Left cardiac atrium (tissue), 4 donors: ENCODE measurements at regions of chr14 and their contacts with region 1.

Region 1: DNA sequence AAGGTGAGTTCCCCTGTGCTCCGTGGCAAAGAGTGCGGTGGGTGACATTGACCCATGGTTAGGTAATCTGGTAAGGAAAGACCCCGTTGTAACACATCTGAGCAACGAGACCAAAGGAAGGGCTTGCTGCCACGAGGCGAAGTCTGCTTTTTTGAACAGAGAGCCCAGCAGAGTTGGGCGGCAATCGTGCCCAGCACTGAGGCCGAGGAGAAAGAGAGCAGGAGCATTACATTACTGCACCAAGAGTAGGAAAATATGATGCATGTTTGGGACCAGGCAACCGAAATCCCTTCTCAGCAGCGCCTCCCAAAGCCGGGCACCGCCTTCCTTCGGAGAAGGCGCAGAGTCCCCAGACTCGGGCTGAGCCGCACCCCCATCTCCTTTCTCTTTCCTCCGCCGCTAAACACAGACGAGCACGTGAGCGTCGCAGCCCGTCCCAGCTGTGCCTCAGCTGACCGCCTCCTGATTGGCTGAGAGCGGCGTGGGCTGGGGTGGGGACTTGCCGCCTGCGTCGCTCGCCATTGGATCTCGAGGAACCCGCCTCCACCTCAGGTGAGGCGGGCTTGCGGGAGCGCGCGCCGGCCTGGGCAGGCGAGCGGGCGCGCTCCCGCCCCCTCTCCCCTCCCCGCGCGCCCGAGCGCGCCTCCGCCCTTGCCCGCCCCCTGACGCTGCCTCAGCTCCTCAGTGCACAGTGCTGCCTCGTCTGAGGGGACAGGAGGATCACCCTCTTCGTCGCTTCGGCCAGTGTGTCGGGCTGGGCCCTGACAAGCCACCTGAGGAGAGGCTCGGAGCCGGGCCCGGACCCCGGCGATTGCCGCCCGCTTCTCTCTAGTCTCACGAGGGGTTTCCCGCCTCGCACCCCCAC is at the start of gene HIF1A:
- DNase-seq: peak; percentile 97
- ATAC-seq: peak; percentile 97 to 98
- total RNA-seq, gene HIF1A: 50.9 to 109 TPM

Region 2: DNA sequence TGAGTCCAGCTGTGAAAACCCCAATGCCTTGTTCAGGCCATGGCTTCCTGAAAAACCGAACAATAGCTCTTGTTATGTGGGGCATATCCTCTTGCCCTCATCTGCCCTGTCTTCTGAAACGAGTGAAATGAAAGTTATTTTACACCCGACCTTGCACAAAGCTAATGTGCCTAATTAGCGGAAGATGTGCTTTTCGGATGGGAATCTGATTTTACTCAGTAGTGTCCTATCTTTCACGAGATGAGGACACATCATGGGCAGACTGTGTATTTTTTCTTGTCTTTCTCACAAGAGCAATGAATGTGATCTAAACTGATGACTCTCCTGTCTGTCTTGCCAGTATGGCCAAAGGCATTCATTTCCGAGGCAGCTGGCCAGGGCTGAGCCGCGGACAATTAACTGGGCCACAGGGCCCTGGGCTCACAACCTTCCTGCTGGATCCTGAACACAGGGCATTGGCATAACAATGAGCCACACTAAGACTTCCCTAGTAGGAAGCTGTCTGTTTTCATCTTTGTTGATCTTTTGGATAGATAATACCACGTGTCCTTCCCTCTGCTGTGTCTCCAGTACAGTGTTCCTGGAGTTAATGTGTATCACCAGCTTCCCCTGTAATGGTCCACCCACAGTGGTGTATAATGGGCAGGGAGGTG is 85.7 kb before region 1 on chr14:
- intact Hi-C with region 1: loop called in 1 of 2 experiments (anchors 10 kb)
- DNase-seq: no peak
- ATAC-seq: peak; percentile 53 to 80